Ascending aorta (tissue), 2 donors: ENCODE measurements at regions of chr14 and their contacts with region 1.

Region 1: GRCh38 chr14:37197421-37198272 is at the start of gene MIPOL1:
- DNase-seq: peak; percentile 18 to 90
- H3K4me3 ChIP-seq: peak within 1 kb of the TSS; percentile 69 to 71
- H3K27ac ChIP-seq: peak within 1 kb of the TSS; percentile 87 to 91
- H3K4me1 ChIP-seq: peaks cover 0 to 2% of the 10 kb centered on the region in 2 donors
- H3K27me3 ChIP-seq: no peaks in the 10 kb centered on the region
- CTCF ChIP-seq: peak in 2 of 3 experiments; percentile 25 to 58
- total RNA-seq, gene MIPOL1: 8.6 TPM

Region 2: GRCh38 chr14:35808076-35808652 is 1389.5 kb before region 1 on chr14:
- intact Hi-C with region 1: loop called (anchors 5 kb)
- DNase-seq: no peak
- H3K4me3 ChIP-seq: peak overlapping the region; percentile 60 to 93
- H3K27ac ChIP-seq: peak overlapping the region; percentile 87 to 97
- H3K4me1 ChIP-seq: peaks cover 0 to 16% of the 10 kb centered on the region in 2 donors
- H3K27me3 ChIP-seq: no peaks in the 10 kb centered on the region
- CTCF ChIP-seq: no peak

Region 3: GRCh38 chr14:37172024-37172869 is 25.4 kb before region 1 on chr14 and contains the start of gene SLC25A21:
- intact Hi-C with region 1: loop called (anchors 2 kb)
- DNase-seq: peak in 1 of 2 donors; percentile 77
- H3K4me3 ChIP-seq: peak within 1 kb of the TSS; percentile 63 to 66
- H3K27ac ChIP-seq: peak within 1 kb of the TSS; percentile 77 to 78
- H3K4me1 ChIP-seq: peaks cover 0 to 6% of the 10 kb centered on the region in 2 donors
- H3K27me3 ChIP-seq: no peaks in the 10 kb centered on the region
- CTCF ChIP-seq: no peak
- total RNA-seq, gene SLC25A21: not detected